OCI-LY7 (cell line): ENCODE measurements at regions of chr10 and their contacts with region 1.

Region 1: GRCh38 chr10:110843031-110843430 is 28.7 kb upstream of the PDCD4 start:
- DNase-seq: peak; percentile 98
- H3K4me3 ChIP-seq: peak overlapping the region; percentile 63
- H3K27ac ChIP-seq: peak overlapping the region; percentile 97
- H3K4me1 ChIP-seq: peaks cover 96% of the 10 kb centered on the region
- CTCF ChIP-seq: no peak

Region 2: GRCh38 chr10:110698782-110699201 is 144.2 kb before region 1 on chr10:
- CTCF ChIA-PET with region 1: no interaction called
- POLR2A ChIA-PET with region 1: no interaction called
- intact Hi-C with region 1: no loop called
- DNase-seq: no peak
- H3K4me3 ChIP-seq: no peak overlapping the region
- H3K27ac ChIP-seq: no peak overlapping the region
- H3K4me1 ChIP-seq: no peaks in the 10 kb centered on the region
- CTCF ChIP-seq: no peak

Region 3: GRCh38 chr10:110857265-110858158 is 14.5 kb after region 1 on chr10:
- CTCF ChIA-PET with region 1: interaction called, 39 read pairs
- POLR2A ChIA-PET with region 1: interaction called, 121 read pairs
- intact Hi-C with region 1: loop called (anchors 1 kb)
- DNase-seq: peak; percentile 84
- H3K4me3 ChIP-seq: peak overlapping the region; percentile 11
- H3K27ac ChIP-seq: peak overlapping the region; percentile 91
- H3K4me1 ChIP-seq: peaks cover 75% of the 10 kb centered on the region
- CTCF ChIP-seq: no peak

Region 4: GRCh38 chr10:110864662-110865140 is 21.7 kb after region 1 on chr10:
- CTCF ChIA-PET with region 1: interaction called, 39 read pairs
- POLR2A ChIA-PET with region 1: interaction called, 121 read pairs
- intact Hi-C with region 1: loop called (anchors 2 kb)
- DNase-seq: peak; percentile 89
- H3K4me3 ChIP-seq: peak overlapping the region; percentile 60
- H3K27ac ChIP-seq: peak overlapping the region; percentile 92
- H3K4me1 ChIP-seq: peaks cover 100% of the 10 kb centered on the region
- CTCF ChIP-seq: no peak